Panc1 (cell line): ENCODE measurements at regions of chr13 and their contacts with region 1.

Region 1: GRCh38 chr13:46126552-46127357 is 21.9 kb upstream of the CPB2 start:
- DNase-seq: peak; percentile 45
- ATAC-seq: peak; percentile 87
- H3K4me3 ChIP-seq: no peak overlapping the region
- H3K27ac ChIP-seq: no peak overlapping the region
- H3K4me1 ChIP-seq: no peaks in the 10 kb centered on the region
- H3K27me3 ChIP-seq: no peaks in the 10 kb centered on the region
- CTCF ChIP-seq: peak; percentile 80

Region 2: DNA sequence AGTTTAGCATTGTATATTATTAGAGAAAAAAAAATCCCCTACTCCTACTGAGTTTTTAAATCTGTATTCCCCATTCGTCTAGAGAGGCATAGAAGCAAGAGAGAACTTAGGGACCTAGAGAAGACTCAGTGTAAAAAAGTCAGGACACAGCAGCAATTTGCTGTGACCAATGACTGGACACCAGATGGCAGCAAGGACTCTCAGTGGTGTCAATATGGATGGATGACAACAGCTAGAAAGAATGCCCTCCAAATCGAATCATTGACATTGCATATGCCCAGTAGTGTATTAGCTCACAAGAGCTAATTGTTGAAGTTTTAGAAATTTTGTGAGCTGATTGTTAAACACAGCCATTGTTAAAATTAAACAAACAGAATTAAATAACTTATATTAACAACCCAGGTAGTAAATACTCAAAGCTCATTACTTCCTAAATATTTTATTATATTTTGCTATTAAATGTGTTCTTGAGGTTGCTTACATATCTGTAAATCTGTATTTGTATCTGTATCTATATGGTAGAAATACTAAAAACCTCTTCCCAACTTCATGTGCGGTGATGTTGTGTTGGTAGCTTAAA is 319.1 kb before region 1 on chr13:
- CTCF ChIA-PET with region 1: interaction called, 8 read pairs
- POLR2A ChIA-PET with region 1: no interaction called
- in situ Hi-C with region 1: no loop called
- intact Hi-C with region 1: loop called (anchors 10 kb)
- DNase-seq: peak; percentile 28
- ATAC-seq: peak; percentile 74; the same call in 1 of the 2 replicates
- H3K4me3 ChIP-seq: no peak overlapping the region
- H3K27ac ChIP-seq: no peak overlapping the region
- H3K4me1 ChIP-seq: no peaks in the 10 kb centered on the region
- H3K27me3 ChIP-seq: no peaks in the 10 kb centered on the region
- CTCF ChIP-seq: peak; percentile 68